ENCODE measurements at regions of chr7 and their contacts with region 1.

Region 1: DNA sequence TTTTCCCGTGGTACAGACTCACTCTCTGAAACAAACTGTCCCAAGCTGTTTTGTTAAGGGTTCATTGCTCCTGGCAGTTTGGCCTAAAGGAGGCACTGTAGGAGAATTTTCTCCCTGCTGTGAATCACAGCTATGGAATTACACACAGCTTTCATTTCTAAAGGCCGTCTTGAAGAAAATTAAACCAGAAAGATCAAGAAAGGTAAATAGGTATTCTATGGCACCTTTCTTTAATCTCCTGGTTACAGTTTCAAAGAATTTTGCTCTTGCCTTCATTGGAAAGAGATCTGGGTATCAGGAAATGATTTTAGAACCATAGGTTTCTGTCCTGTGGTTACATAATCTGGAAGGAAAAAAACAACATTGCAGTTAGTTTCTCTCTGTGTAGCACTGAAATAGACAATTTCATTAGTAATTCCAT is 51.2 kb downstream of the PDK4 start:
- DNase-seq: peak in 1 of 2 donors; percentile 81
- H3K4me3 ChIP-seq: peak overlapping the region; percentile 36 to 55
- H3K27ac ChIP-seq: peak overlapping the region; percentile 50 to 60
- H3K4me1 ChIP-seq: peaks cover 6 to 39% of the 10 kb centered on the region in 2 donors
- H3K27me3 ChIP-seq: no peaks in the 10 kb centered on the region
- CTCF ChIP-seq: peak; percentile 41 to 76 (median 72)

Region 2: GRCh38 chr7:95527033-95527775 is 17.9 kb before region 1 on chr7:
- intact Hi-C with region 1: loop called (anchors 2 kb)
- DNase-seq: peak in 1 of 2 donors; percentile 69
- H3K4me3 ChIP-seq: no peak overlapping the region
- H3K27ac ChIP-seq: no peak overlapping the region
- H3K4me1 ChIP-seq: no peaks in the 10 kb centered on the region
- H3K27me3 ChIP-seq: no peaks in the 10 kb centered on the region
- CTCF ChIP-seq: peak; percentile 69 to 90 (median 78)

Region 3: DNA sequence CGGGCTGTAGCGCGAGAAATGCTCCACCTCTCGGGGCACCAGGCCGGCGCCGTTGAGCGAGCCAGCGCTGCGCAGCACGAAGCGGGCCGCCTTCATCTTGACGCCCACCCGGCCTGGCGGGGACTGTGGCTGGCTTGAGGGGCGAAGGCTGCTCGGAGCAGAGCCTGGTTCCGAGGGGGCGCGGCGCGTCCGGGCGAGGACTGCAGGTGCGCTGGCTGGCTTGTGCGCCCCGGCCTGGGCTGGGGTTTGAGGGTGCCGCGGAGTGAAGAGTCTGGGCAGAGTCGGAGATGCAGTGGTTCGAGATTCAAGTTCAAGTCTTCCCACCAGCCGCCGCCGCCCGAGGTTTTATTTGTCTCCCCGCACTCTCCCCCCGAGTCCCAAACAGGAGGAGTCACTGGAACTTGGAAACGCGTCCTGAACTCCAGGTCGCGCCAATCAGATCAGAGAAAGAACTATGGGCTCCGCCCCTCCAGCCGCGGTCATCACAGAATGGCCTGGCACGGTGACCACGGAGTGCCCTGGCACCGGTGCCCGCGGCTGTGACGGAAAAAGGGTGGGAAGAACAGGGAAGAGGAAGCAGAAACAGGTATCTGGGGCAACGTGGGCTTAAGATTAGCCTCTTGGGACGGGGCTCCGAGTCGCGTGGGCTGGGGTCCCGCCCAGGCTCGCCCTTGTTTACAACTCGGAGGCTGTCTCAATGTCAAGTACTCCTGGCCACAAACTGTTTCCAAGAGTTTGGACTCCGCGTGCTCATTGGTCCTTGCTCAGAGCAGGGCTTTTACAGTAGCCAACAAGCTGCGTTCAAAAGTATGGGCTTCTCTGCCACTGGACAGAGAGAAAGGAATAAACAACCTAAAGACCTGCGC is 51.3 kb after region 1 on chr7 and contains the start of gene PDK4:
- intact Hi-C with region 1: loop called (anchors 1 kb)
- DNase-seq: peak; percentile 90 to 99
- H3K4me3 ChIP-seq: peak within 1 kb of the TSS; percentile 86 to 95
- H3K27ac ChIP-seq: peak within 1 kb of the TSS; percentile 95 to 97
- H3K4me1 ChIP-seq: peaks cover 0 to 13% of the 10 kb centered on the region in 2 donors
- H3K27me3 ChIP-seq: no peaks in the 10 kb centered on the region
- CTCF ChIP-seq: no peak
- total RNA-seq, gene PDK4: 227 TPM

Region 4: GRCh38 chr7:95608359-95609173 is 63.5 kb after region 1 on chr7:
- intact Hi-C with region 1: loop called (anchors 1 kb)
- DNase-seq: peak; percentile 86 to 98
- H3K4me3 ChIP-seq: peak overlapping the region; percentile 26 to 30
- H3K27ac ChIP-seq: peak overlapping the region; percentile 68 to 84
- H3K4me1 ChIP-seq: peaks cover 0 to 46% of the 10 kb centered on the region in 2 donors
- H3K27me3 ChIP-seq: no peaks in the 10 kb centered on the region
- CTCF ChIP-seq: no peak

Region 5: DNA sequence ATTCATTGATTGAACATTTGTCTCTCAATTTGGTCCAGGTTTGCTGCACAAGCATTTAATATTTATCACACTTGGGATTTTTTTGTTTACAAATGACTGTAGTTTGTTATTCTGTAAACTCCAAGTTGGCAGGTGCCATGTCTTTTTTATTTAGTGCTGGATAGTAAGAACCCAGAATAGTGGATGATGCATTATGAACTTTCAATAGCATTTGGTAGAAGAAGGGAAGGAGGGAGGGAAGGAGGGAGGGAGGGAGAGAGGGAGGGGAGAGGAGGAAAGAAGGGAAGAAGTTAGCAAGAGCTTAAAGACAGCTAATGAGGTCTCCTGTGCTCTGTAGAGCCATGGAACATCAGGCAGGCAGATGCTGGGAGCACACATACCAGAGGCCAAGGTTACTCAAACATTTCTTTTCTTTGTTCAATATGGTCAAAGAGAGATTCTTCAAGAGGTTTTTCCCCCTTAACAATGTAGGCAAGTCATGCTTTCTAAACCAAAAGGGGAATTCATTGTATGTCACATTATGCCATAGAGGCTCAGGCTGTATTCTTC is 77.0 kb after region 1 on chr7:
- intact Hi-C with region 1: no loop called
- DNase-seq: no peak
- H3K4me3 ChIP-seq: no peak overlapping the region
- H3K27ac ChIP-seq: no peak overlapping the region
- H3K4me1 ChIP-seq: no peaks in the 10 kb centered on the region
- H3K27me3 ChIP-seq: no peaks in the 10 kb centered on the region
- CTCF ChIP-seq: no peak

Region 6: DNA sequence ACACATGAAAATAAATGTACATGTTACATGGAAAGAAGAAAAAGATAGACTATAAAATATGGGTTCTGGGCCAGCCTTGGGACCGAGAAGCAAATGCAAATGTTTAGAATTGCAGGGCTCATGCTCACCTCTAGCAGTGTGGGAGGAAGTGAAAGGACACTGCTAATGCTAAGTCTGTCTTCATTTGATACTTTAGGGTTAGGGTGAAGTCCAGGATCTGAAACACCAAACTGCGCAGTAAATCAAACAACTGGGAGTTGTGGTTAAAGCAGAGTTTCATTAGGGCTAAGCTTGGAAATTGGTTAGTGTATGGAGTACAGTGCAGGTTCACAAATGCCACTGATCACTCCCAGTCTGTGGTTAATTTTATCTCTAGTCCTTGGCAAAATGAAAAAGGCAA is 124.4 kb after region 1 on chr7:
- intact Hi-C with region 1: no loop called
- DNase-seq: no peak
- H3K4me3 ChIP-seq: no peak overlapping the region
- H3K27ac ChIP-seq: no peak overlapping the region
- H3K4me1 ChIP-seq: peaks cover 0 to 5% of the 10 kb centered on the region in 2 donors
- H3K27me3 ChIP-seq: no peaks in the 10 kb centered on the region
- CTCF ChIP-seq: no peak

Region 7: DNA sequence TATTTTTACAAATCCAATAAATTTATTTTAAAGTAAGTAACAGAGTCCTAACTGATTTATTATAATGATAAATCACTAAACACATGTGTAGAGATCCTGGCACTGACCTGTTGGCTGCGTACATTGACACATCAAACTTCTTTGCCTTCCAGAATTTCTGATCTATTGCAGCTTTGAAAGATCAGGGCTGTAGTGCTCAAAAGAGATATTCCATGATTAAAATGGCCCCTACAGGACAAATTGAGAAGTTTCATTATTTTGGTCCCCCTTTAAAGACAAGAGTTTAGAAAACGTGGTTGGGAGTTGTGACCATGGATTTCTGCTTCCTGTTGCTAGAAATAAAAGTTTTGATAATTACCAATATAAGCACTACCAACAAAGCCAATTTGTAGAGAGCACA is 138.9 kb after region 1 on chr7:
- intact Hi-C with region 1: loop called (anchors 1 kb)
- DNase-seq: no peak
- H3K4me3 ChIP-seq: no peak overlapping the region
- H3K27ac ChIP-seq: no peak overlapping the region
- H3K4me1 ChIP-seq: no peaks in the 10 kb centered on the region
- H3K27me3 ChIP-seq: no peaks in the 10 kb centered on the region
- CTCF ChIP-seq: peak; percentile 38 to 63 (median 57)

Measured in ascending aorta (tissue), 2 donors.